Activated CD4-positive, alpha-beta memory T cell treated with anti-CD3 and anti-CD28 coated beads for 36 hours (primary cell): ENCODE measurements at regions of chr12 and their contacts with region 1.

Region 1: DNA sequence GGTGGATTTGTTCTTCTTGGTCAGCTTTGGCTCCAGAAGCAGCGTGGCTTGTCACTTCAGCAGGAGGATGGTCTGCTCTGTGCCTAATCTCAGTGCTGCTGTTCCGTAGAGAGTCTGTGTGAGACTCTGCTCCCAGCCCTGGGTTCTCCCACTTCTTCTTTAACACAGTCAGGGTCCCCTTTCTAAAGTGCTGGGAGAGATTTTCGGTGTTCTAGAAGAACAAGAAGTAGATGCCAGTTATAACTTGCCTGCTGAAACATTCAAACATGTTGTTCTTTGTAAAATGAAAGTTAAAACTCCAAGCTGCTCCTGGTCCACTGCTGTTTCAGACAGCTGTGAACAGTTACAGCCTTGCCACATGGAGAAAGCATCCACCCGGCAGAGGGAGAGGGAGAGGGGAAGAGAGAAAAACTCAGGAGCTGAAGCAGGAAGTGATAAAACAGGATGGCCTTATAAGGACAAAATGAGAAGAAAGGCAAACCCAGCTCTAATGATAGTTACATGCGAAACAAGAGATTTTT is 55.2 kb upstream of the CERS5 start:
- DNase-seq: peak; percentile 39
- H3K4me3 Mint-ChIP-seq: no peak overlapping the region
- H3K27ac Mint-ChIP-seq: no peak overlapping the region
- H3K4me1 Mint-ChIP-seq: peaks cover 36% of the 10 kb centered on the region
- H3K27me3 Mint-ChIP-seq: no peaks in the 10 kb centered on the region

Region 2: DNA sequence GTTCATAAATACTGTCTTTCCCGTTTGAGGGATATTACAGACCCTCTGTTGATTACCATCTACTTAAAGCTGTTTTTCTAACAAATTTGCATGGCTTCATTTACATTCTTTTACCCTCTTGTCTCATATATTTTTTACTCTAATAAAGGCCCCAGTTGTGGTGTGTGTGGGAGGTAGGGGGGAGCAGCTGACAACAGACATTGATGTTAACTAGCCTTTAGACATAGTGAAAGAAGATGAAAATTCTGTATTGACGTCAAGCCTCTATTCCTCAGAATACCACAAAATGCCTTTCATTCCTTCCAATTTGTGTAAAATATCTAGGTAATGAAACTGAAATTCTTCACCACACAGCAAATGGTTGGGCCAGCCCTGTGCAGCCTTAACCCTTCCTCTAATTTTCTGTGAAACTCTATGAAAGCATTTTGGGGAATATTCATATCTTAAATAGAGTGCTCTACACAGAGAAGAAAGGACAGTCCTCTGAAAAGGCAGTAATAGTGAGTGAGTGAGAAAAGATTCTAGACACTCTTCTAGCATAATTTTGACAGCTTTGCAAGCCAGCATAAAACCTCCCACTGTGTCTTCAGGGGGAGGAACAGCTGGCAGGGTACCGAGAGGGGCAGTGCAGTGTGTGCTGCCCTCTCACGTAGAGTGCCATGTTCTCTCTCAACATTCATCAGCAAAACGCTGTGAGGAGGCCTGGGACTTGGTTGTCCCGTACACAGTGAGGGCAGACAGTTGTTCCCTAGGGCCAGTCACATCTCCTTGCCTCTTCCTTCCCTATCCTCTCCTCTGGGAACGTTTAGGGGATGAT is 35.0 kb before region 1 on chr12:
- CTCF ChIA-PET with region 1: interaction called, 19 read pairs
- POLR2A ChIA-PET with region 1: interaction called, 21 read pairs
- intact Hi-C with region 1: loop called (anchors 1 kb)
- DNase-seq: peak; percentile 81
- H3K4me3 Mint-ChIP-seq: peak overlapping the region; percentile 46
- H3K27ac Mint-ChIP-seq: peak overlapping the region; percentile 99
- H3K4me1 Mint-ChIP-seq: peaks cover 55% of the 10 kb centered on the region
- H3K27me3 Mint-ChIP-seq: no peaks in the 10 kb centered on the region

Region 3: GRCh38 chr12:50246873-50247612 is 24.7 kb after region 1 on chr12:
- CTCF ChIA-PET with region 1: interaction called, 20 read pairs
- POLR2A ChIA-PET with region 1: interaction called, 31 read pairs
- intact Hi-C with region 1: loop called (anchors 1 kb)
- DNase-seq: peak; percentile 73
- H3K4me3 Mint-ChIP-seq: peak overlapping the region; percentile 78
- H3K27ac Mint-ChIP-seq: peak overlapping the region; percentile 91
- H3K4me1 Mint-ChIP-seq: peaks cover 69% of the 10 kb centered on the region
- H3K27me3 Mint-ChIP-seq: no peaks in the 10 kb centered on the region

Region 4: DNA sequence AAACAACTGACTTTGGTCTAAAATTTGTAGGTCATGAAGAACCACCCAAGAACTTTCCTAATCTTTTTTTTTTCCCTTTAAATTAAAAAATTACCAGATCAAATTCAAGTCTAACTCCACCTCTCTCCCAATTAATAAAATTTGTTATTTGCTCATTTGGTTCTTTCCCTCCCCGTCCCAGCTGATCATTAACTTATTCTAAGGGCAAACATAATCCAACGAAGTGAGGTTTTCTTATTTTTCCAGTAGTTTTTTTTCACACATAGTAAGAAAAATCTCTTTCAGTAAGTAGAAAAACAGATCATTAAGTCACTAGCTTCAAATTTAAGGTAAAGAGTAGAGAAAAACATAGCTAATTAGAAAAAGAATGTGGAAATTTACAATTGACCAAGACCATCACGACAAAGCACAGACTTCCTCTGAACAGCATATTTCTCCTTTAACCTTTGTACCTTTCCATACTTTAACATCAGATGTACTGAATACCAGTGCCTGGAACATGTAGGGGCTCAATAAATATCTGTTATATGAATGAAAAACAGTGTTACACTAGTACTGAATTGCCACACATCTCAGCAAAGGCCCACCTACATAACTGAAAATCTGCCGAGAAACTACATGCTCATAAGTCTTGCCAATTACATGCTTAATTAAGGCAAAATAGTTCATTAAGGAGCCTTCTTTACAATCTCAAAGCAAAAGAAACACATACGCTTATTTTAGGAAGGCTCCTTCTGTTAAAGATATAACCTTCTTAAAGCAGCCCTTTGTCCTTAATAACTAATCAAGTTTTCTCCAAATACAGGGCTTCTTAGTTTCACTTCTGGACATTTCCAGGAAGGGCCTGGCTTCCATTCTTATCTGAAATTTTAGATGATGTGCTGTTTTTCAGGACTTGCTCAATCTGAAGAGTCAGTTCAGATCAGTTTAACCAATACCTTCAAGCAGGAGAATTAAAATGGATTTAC is 49.2 kb after region 1 on chr12:
- CTCF ChIA-PET with region 1: no interaction called
- POLR2A ChIA-PET with region 1: no interaction called
- intact Hi-C with region 1: no loop called
- DNase-seq: no peak
- H3K4me3 Mint-ChIP-seq: no peak overlapping the region
- H3K27ac Mint-ChIP-seq: no peak overlapping the region
- H3K4me1 Mint-ChIP-seq: peaks cover 4% of the 10 kb centered on the region
- H3K27me3 Mint-ChIP-seq: no peaks in the 10 kb centered on the region

Region 5: DNA sequence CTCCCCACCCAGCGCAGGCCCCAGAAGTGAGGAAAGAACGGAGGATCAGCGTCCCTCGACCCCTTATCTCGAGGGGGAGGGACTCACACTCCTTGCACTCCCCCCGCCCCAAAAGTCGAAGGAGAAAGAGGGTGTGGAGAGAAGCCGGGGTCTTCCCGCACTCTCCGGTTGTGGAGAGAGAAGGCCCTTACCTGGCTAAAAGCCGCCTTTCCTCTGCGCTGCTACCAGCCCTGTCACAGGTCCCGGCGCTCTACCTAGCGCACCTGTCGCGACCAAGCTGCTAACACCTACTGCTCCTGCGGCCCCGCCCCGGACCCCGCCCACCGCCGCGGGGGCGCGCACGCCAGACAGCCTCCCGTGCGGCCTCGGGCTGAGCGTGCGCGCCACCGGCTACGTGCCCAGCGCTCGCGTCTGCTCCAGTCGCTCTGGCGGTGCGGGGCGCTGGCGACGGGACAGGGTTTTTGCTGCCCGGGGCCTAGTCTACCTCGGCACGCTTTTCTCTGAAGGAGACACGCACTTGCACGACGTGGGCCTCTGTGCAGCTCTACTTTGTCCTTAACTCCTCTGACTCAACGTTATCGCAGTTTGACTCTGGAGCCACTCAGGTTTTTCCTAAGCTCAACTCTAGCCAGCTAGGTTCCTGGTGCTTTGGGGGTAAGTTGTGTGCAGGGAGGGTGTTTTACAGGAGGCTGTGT is 61.0 kb after region 1 on chr12 and contains the start of gene LIMA1:
- CTCF ChIA-PET with region 1: interaction called, 4 read pairs
- POLR2A ChIA-PET with region 1: interaction called, 17 read pairs
- intact Hi-C with region 1: loop called (anchors 2 kb)
- DNase-seq: peak; percentile 94
- H3K4me3 Mint-ChIP-seq: peak within 1 kb of the TSS; percentile 89
- H3K27ac Mint-ChIP-seq: peak within 1 kb of the TSS; percentile 62
- H3K4me1 Mint-ChIP-seq: peaks cover 25% of the 10 kb centered on the region
- H3K27me3 Mint-ChIP-seq: no peaks in the 10 kb centered on the region
- total RNA-seq, gene LIMA1: 115 to 117 TPM

Region 6: DNA sequence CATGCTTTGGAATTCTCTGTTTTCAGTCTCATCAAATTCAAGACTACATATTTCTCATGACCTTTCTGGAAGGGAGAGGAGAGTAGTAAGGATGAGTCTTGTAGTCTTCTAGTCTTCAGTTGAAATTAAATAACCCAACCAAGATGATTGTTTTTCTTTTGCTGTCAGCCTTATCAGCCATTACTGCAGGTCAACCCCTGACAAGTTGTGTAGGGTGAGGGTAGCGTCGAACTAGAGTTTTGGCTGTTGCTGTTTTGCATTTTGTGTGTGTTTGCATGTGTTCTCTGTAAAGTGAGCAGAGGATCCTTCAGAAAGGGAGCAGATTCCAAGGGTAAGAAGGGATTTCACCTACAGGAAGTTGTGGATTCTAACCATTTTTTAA is 310.9 kb after region 1 on chr12:
- CTCF ChIA-PET with region 1: no interaction called
- POLR2A ChIA-PET with region 1: no interaction called
- intact Hi-C with region 1: loop called (anchors 5 kb)
- DNase-seq: no peak
- H3K4me3 Mint-ChIP-seq: no peak overlapping the region
- H3K27ac Mint-ChIP-seq: no peak overlapping the region
- H3K4me1 Mint-ChIP-seq: peaks cover 38% of the 10 kb centered on the region
- H3K27me3 Mint-ChIP-seq: no peaks in the 10 kb centered on the region